Common myeloid progenitor, CD34-positive (primary cell): ENCODE measurements at regions of chr4 and their contacts with region 1.

Region 1: GRCh38 chr4:83639849-83640493 is 104.1 kb downstream of the GPAT3 start:
- DNase-seq: peak; percentile 78 to 88 (median 80)
- H3K4me3 ChIP-seq: no peak overlapping the region
- H3K27ac ChIP-seq: no peak overlapping the region
- H3K4me1 ChIP-seq: no peaks in the 10 kb centered on the region
- H3K27me3 ChIP-seq: no peaks in the 10 kb centered on the region

Region 2: GRCh38 chr4:83503974-83504373 is 136.0 kb before region 1 on chr4:
- CTCF ChIA-PET with region 1: interaction called, 103 read pairs
- POLR2A ChIA-PET with region 1: interaction called, 4 read pairs
- DNase-seq: peak in 1 of 3 donors; percentile 11
- H3K4me3 ChIP-seq: no peak overlapping the region
- H3K27ac ChIP-seq: no peak overlapping the region
- H3K4me1 ChIP-seq: peaks cover 0 to 8% (median 2%) of the 10 kb centered on the region in 4 experiments
- H3K27me3 ChIP-seq: no peaks in the 10 kb centered on the region

Region 3: GRCh38 chr4:83651502-83652245 is 11.7 kb after region 1 on chr4:
- CTCF ChIA-PET with region 1: interaction called, 18 read pairs
- POLR2A ChIA-PET with region 1: no interaction called
- DNase-seq: no peak
- H3K4me3 ChIP-seq: no peak overlapping the region
- H3K27ac ChIP-seq: no peak overlapping the region
- H3K4me1 ChIP-seq: no peaks in the 10 kb centered on the region
- H3K27me3 ChIP-seq: peaks cover 0 to 2% (median 0%) of the 10 kb centered on the region in 5 experiments

Region 4: GRCh38 chr4:83658806-83659495 is 19.0 kb after region 1 on chr4:
- CTCF ChIA-PET with region 1: interaction called, 18 read pairs
- POLR2A ChIA-PET with region 1: no interaction called
- DNase-seq: no peak
- H3K4me3 ChIP-seq: no peak overlapping the region
- H3K27ac ChIP-seq: no peak overlapping the region
- H3K4me1 ChIP-seq: no peaks in the 10 kb centered on the region
- H3K27me3 ChIP-seq: no peaks in the 10 kb centered on the region